Heart right ventricle (tissue), 16 donors: ENCODE measurements at regions of chr5 and their contacts with region 1.

Region 1: DNA sequence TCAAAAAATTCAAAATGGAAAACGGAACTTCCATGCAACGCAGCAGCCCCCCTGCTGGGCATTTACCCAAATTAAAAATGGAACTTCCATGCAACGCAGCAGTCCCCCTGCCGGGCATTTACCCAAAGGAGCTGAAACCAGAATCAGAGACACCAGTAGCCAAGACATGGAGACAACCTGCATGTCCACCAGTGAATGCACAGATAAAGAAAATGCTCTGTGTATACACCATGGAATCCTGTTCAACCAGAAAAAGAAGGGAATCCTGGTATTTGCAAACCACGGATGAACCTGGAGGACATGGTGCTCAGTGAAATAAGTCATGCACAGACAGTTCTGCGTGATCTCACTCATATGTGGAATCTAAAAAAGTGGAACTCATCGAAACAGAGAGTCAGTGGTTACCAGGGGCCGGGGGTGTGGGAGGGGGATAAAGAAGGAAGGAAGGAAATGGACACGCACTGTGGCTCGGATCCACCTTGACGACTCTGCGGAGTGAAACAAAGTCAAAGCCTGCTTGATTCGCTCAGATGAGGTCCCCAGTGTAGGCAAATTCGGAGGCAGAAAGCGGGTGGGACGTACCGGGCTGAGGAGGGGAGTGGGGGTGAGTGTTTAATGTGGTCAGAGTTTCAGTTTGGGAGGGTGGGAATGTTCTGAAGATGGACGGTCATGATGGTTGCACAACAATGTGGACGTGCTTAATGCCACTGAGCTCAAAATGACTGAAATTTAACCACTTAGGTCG is 40.2 kb upstream of the EXOC3 start:
- DNase-seq: no peak
- ATAC-seq: no peak
- H3K4me3 ChIP-seq: no peak overlapping the region
- H3K27ac ChIP-seq: no peak overlapping the region
- H3K4me1 ChIP-seq: peaks cover 0 to 18% (median 14%) of the 10 kb centered on the region in 9 donors
- H3K27me3 ChIP-seq: peaks cover 0 to 30% (median 9%) of the 10 kb centered on the region in 7 donors
- CTCF ChIP-seq: no peak

Region 2: GRCh38 chr5:343461-344401 is 59.1 kb before region 1 on chr5:
- intact Hi-C with region 1: loop called in 1 of 10 experiments (anchors 2 kb)
- DNase-seq: peak in 1 of 2 donors; percentile 68
- ATAC-seq: peak; percentile 45 to 87 (median 75)
- H3K4me3 ChIP-seq: peak overlapping the region; percentile 6 to 56 (median 37)
- H3K27ac ChIP-seq: no peak overlapping the region
- H3K4me1 ChIP-seq: peaks cover 0 to 5% (median 0%) of the 10 kb centered on the region in 9 donors
- H3K27me3 ChIP-seq: peaks cover 0 to 48% (median 39%) of the 10 kb centered on the region in 7 donors
- CTCF ChIP-seq: peak in 1 of 9 donors; percentile 13

Region 3: DNA sequence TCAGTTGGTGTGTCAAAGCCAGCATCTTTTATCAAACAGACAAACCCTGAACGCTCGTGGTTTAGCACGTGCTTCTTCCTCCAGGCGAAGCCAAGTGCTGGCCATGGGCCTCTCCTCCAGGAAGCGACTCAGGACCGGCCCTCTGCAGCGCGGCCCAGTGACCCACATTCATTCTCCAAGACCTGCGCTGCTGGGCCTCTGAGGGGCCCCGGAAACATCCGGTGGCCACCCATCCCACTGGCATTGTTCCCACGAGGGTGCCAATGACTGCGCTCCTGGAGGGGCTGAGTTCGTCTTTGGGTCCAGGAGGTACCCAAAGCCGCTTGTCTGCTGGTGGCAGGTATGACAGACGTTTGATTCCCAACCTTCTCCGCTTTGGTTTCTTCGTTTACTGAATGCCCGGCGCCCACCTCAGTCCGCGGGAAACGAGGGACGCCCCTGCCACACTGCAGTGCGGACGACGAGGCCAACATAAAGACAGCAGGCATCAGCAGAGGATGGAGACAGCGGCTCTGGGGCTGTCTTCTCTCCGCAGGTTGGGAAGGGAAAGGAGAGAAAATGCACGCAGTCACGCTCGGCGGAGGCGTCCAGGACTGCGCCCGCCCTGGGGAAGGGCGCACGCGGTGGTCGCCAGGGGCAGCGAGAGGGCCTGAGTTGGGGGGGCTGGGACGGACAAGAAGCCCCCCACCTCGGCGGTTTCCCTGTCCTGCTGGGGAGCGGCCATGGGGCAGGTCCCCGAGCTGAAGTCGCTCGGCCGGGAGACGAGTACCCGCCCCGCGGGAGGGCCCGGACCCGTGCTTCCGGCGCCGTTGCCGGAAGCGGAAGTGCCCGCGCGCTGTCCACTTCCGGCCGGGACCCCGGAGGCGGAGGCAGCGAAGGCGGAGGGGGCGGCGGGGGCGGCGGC is 39.8 kb after region 1 on chr5 and contains the start of gene EXOC3:
- intact Hi-C with region 1: no loop called
- DNase-seq: peak; percentile 63 to 80
- ATAC-seq: peak; percentile 89 to 96 (median 94)
- H3K4me3 ChIP-seq: peak within 1 kb of the TSS; percentile 62 to 99 (median 87)
- H3K27ac ChIP-seq: peak within 1 kb of the TSS; percentile 64 to 95 (median 87)
- H3K4me1 ChIP-seq: peaks cover 3 to 44% (median 21%) of the 10 kb centered on the region in 9 donors
- H3K27me3 ChIP-seq: peaks cover 0 to 1% (median 0%) of the 10 kb centered on the region in 7 donors
- CTCF ChIP-seq: no peak
- total RNA-seq, gene EXOC3: 35.9 to 44.7 (median 41.0) TPM